ENCODE measurements at regions of chr6 and their contacts with region 1.

Region 1: GRCh38 chr6:139355172-139355571 is 19.3 kb downstream of the CITED2 start:
- DNase-seq: no peak
- H3K4me3 ChIP-seq: no peak overlapping the region
- H3K27ac ChIP-seq: no peak overlapping the region
- H3K27me3 ChIP-seq: no peaks in the 10 kb centered on the region
- CTCF ChIP-seq: no peak

Region 2: GRCh38 chr6:139161817-139162284 is 193.3 kb before region 1 on chr6:
- CTCF ChIA-PET with region 1: no interaction called
- POLR2A ChIA-PET with region 1: no interaction called
- DNase-seq: no peak
- H3K4me3 ChIP-seq: no peak overlapping the region
- H3K27ac ChIP-seq: no peak overlapping the region
- H3K27me3 ChIP-seq: no peaks in the 10 kb centered on the region
- CTCF ChIP-seq: no peak

Region 3: GRCh38 chr6:139219271-139219729 is 135.9 kb before region 1 on chr6:
- CTCF ChIA-PET with region 1: interaction called, 38 read pairs
- POLR2A ChIA-PET with region 1: interaction called, 4 read pairs
- DNase-seq: peak; percentile 77
- H3K4me3 ChIP-seq: no peak overlapping the region
- H3K27ac ChIP-seq: no peak overlapping the region
- H3K27me3 ChIP-seq: no peaks in the 10 kb centered on the region
- CTCF ChIP-seq: peak; percentile 91

Region 4: DNA sequence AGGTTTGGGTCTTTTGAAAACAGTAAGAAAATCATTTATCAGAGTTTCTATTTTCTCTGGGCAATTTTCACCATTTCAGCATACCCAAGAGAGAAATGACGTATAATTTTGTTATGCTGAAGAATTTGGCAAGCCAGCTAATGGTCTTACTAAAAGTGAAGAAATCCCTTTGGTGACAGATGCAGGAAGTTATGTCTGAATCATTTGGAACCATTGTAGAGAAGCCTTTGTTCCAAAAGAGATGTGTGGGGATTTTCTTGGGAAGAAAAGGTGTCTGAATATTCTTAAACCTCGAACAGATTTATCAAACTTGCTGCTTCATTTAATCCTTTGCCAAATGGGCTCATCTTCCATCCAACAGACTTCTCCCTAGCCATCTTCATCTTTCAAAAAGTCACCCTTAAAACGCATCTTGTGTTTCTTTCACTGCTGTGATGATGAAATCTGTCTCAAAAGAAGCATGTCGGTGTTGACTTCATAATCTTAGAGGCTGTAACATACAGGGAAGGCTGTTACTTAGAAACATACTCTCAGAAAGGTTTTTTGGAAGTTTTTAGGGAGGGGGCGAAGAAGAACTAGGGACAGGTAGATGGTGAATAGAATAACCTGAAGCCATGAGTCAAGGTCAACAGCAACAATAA is 20.2 kb before region 1 on chr6:
- CTCF ChIA-PET with region 1: no interaction called
- POLR2A ChIA-PET with region 1: no interaction called
- DNase-seq: peak; percentile 71
- H3K4me3 ChIP-seq: no peak overlapping the region
- H3K27ac ChIP-seq: peak overlapping the region; percentile 77
- H3K27me3 ChIP-seq: no peaks in the 10 kb centered on the region
- CTCF ChIP-seq: no peak

Region 5: DNA sequence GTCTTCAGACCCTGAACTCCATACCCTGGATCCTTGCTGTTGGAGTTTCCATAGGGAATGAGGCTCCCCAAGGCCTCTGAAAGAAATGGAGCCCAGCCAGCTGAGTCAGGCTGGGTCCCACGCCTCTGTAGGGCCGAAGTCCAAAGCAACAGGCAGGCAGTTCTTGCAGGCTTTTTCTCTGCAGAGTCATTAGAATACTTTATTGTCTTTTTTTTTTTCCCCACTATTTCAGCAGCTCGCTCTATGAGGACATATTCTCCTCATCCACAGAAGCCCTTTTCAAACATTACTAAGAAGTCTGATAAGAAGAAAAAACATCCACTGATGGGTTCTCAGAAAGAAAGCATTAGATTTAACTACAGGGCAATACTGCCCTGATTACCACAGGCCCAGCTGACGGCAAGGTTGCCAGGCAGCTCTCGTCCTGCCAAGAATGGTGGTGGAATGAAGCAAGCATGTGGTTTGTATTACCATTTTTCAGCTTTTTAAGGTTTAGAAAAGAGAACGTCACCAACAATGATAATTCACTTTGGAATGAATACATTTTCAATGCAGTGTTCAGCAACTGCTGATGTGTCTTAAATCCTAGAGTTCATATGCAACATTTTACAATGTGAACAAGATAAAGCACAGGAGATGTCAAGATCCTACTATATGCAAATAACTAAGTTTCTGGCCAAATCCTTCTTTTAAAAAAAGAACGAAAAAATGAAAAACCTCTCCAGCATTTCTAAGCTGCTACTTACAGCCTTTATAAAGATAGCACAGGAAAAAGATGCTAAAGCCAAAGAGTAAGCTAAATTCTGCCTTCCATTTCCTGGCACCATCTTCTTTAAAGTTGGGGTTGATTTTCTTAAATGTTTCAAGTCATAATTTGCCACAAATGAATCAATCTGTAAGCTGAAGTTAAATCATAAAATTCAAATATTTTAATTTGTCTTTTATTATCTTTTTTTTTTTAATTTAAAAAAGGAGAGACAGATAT is 242.9 kb after region 1 on chr6:
- CTCF ChIA-PET with region 1: no interaction called
- POLR2A ChIA-PET with region 1: no interaction called
- DNase-seq: peak; percentile 95
- H3K4me3 ChIP-seq: no peak overlapping the region
- H3K27ac ChIP-seq: peak overlapping the region; percentile 95
- H3K27me3 ChIP-seq: no peaks in the 10 kb centered on the region
- CTCF ChIP-seq: no peak

Measured in AG04450 (cell line).